Cardiac septum (tissue), 1 donor: ENCODE measurements at regions of chr3 and their contacts with region 1.

Region 1: DNA sequence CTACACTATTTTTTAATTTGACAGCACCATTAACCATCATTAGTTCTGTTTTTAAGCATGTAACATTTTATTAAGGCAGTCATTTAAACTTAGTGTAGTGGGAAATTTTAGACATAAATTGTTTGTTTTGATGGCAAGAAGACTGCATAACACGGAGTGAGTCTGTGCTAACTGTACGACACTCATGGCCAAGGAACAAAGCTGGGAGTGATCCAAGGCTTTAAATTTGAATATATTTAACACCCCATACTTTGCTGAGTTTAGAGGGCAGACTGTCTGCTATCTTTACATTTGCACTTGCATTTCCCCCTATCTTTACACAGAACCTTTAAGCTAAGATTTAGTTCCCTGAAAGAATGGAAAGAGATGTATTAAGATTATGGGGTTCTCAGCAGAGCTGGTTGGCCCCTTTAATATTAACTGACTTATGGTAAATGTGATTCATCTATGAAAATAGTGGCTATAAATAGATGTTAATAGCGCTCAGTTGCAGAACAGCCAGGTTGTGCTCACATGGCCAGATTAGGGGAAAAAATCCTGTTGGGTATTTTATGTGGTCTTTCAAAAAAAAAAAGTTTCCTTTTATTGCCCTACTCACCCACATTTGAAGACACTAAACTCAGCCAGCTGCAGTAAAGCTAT is 120.7 kb downstream of the CMSS1 start:
- DNase-seq: no peak

Region 2: DNA sequence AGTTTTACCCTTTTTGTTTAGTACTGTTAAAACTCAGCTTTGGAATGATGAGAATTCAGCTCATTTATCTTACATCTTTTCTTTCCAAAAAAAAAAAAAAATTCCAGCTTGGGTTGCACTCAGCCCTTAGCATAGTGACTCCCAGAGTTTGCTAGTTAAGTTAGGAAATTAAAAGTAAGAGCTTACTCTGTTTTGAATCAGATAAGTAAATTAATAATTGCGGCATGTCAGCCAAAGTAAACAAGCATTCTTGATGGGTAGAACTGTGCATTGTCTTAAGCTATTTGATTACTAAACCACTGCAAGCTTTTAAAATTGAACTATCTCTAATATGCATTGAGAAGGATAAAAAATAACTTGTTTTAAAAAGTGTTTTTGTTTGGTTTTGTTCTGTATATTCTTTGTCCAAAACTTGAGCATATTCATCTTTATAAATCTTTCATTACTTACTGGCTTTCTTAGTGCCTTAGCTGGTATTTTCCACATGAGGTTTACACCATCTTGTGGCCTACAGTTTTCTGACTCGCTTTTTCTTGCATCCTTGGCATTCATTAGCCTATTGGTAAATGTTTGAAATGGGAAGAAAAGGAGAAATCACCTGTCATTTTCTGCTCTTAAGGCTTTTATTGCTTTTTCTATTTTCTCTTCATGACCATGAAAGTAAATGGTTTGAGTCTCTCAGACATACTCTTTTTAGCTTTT is 68.3 kb after region 1 on chr3:
- intact Hi-C with region 1: loop called (anchors 5 kb)
- DNase-seq: no peak